Activated T-helper 1 cell treated with anti-CD3 and anti-CD28 coated beads, Interleukin-12 subunit alpha, Interleukin-12 subunit beta, Interleukin-2, Interleukin-4 antibody, amounts not matched to agents 30 ng/mL and 10 ng/mL and 1 ng/mL, durations not matched to agents 14 hours and 24 hours and 36 hours (primary cell): ENCODE measurements at regions of chr5 and their contacts with region 1.

Region 1: GRCh38 chr5:40679155-40679913 is 381 bp upstream of the PTGER4 start:
- DNase-seq: peak; percentile 91
- H3K4me3 Mint-ChIP-seq: peak overlapping the region; percentile 99
- H3K27ac Mint-ChIP-seq: peak overlapping the region; percentile 99
- H3K4me1 Mint-ChIP-seq: peaks cover 66% of the 10 kb centered on the region
- H3K27me3 Mint-ChIP-seq: no peaks in the 10 kb centered on the region

Region 2: DNA sequence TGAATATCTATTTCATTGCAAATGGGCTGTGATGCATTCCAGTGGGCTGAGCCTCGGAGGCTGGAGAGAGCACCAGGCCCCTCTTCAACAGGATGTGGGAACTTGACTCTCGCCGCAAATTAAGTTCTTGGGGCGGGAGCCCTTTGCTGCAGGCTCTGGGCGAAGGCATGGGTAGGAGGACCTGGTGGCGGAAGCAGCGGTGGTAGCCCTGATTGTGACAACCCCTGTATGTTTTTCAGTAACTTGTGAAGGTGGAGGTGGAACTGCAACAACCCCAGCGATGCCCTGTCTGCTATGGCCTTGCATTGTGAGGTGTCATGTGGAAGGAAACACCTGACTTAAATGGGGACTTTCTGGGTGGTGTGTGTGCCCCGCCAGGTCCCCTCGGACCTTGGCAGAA is 1469.4 kb before region 1 on chr5:
- intact Hi-C with region 1: loop called (anchors 5 kb)
- DNase-seq: peak; percentile 78
- H3K4me3 Mint-ChIP-seq: peak overlapping the region; percentile 67
- H3K27ac Mint-ChIP-seq: peak overlapping the region; percentile 92
- H3K4me1 Mint-ChIP-seq: peaks cover 94% of the 10 kb centered on the region
- H3K27me3 Mint-ChIP-seq: no peaks in the 10 kb centered on the region

Region 3: GRCh38 chr5:40410231-40410861 is 269.0 kb before region 1 on chr5:
- intact Hi-C with region 1: loop called (anchors 1 kb)
- DNase-seq: peak; percentile 76
- H3K4me3 Mint-ChIP-seq: peak overlapping the region; percentile 72
- H3K27ac Mint-ChIP-seq: peak overlapping the region; percentile 95
- H3K4me1 Mint-ChIP-seq: peaks cover 70% of the 10 kb centered on the region
- H3K27me3 Mint-ChIP-seq: no peaks in the 10 kb centered on the region

Region 4: DNA sequence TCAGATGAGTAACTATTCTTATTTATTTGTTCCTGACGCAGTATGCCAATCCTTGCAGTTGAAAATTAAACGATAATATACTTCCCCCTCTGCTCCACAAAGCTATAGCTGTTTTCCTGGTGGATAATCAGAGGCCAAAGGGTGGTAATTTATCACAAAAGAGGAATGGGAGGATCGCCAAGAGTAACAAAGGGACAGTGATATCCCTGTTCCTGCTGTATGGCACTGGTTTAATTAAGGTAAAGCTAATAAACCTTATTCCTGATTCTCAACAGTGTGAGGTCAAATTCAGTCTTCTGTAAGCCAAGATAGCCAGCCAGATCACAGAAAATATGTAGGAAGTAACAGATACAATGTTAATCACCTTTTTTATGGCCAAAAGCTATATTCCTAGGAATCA is 33.0 kb before region 1 on chr5:
- intact Hi-C with region 1: loop called (anchors 1 kb)
- DNase-seq: no peak
- H3K4me3 Mint-ChIP-seq: no peak overlapping the region
- H3K27ac Mint-ChIP-seq: no peak overlapping the region
- H3K4me1 Mint-ChIP-seq: peaks cover 42% of the 10 kb centered on the region
- H3K27me3 Mint-ChIP-seq: no peaks in the 10 kb centered on the region

Region 5: GRCh38 chr5:40755407-40756365 is 76.4 kb after region 1 on chr5 and contains the start of gene TTC33:
- intact Hi-C with region 1: loop called (anchors 1 kb)
- DNase-seq: peak; percentile 92
- H3K4me3 Mint-ChIP-seq: no peak within 1 kb of the TSS
- H3K27ac Mint-ChIP-seq: peak within 1 kb of the TSS; percentile 41
- H3K4me1 Mint-ChIP-seq: peaks cover 21% of the 10 kb centered on the region
- H3K27me3 Mint-ChIP-seq: no peaks in the 10 kb centered on the region
- total RNA-seq, gene TTC33: 23.4 and 24.6 TPM in 2 replicates

Region 6: GRCh38 chr5:40853632-40854192 is 174.4 kb after region 1 on chr5:
- intact Hi-C with region 1: no loop called
- DNase-seq: no peak
- H3K4me3 Mint-ChIP-seq: no peak overlapping the region
- H3K27ac Mint-ChIP-seq: no peak overlapping the region
- H3K4me1 Mint-ChIP-seq: no peaks in the 10 kb centered on the region
- H3K27me3 Mint-ChIP-seq: no peaks in the 10 kb centered on the region

Region 7: DNA sequence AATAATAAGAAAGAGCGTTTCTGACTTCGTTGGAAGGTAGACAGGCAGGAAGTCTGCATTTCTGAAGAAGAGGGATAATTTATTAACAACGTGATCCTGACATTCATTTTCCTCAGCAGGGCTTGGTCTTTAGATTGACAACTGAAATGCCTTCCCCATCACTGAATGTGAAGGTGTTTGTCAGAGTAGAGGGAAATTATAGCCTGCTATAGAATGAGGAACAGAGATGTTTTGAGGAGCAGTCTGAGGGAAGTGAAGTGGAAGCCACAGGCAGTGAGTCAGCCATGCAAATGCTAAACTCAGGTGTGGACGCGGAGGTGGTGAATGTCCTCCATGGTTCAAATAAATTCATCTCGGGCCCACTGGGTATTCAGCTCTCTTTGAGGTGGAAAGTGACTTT is 260.4 kb after region 1 on chr5:
- intact Hi-C with region 1: no loop called
- DNase-seq: no peak
- H3K4me3 Mint-ChIP-seq: no peak overlapping the region
- H3K27ac Mint-ChIP-seq: no peak overlapping the region
- H3K4me1 Mint-ChIP-seq: no peaks in the 10 kb centered on the region
- H3K27me3 Mint-ChIP-seq: no peaks in the 10 kb centered on the region